Right ventricle myocardium inferior (tissue), 1 donor: ENCODE measurements at regions of chr5 and their contacts with region 1.

Region 1: GRCh38 chr5:109409844-109410388 is at the start of gene PJA2:
- DNase-seq: peak; percentile 99
- ATAC-seq: peak; percentile 97
- total RNA-seq, gene PJA2: 70.5 TPM

Region 2: GRCh38 chr5:108727651-108728565 is 682.0 kb before region 1 on chr5:
- intact Hi-C with region 1: loop called (anchors 5 kb)
- DNase-seq: peak; percentile 92
- ATAC-seq: peak; percentile 100

Region 3: DNA sequence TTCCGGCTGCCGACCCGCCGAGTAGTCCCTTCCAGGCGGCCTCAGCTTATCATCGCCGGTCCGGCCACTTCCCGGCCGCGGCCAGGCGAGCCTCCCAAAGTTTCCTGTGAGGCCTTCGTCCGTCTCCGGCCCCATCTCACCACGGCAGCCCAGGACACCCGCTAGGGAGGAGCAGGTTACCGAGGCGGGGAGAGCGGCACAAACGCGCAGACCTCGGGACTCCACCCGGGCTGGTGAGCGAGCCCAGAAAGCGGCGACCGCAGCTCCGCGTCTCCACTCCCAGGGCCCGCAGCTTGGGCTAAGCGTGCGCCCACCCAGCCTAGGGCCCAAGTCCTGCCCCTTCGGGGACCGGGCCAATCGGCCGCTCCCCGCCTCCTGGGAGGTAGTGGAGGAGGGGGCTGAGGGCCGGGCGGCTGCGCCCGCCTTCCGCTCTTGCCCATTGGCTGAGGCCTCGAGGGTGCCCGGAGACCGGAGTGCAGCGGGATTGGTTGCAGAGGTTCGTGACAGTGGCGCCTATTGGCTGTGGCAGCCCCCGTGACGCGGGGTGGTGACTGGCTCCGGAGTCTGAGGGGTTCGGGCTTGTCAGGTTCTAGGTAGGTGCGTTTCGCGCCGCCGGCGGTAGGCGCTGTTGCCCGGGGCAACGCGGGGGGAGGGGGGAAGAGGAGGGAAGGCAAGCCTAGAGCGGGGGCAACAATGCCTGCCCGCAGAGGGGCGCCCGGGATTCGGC is 661.4 kb before region 1 on chr5:
- intact Hi-C with region 1: loop called (anchors 1 kb)
- DNase-seq: peak; percentile 99
- ATAC-seq: peak; percentile 99

Region 4: GRCh38 chr5:109347252-109347888 is 62.5 kb before region 1 on chr5:
- intact Hi-C with region 1: loop called (anchors 5 kb)
- DNase-seq: peak; percentile 53
- ATAC-seq: peak; percentile 66

Region 5: DNA sequence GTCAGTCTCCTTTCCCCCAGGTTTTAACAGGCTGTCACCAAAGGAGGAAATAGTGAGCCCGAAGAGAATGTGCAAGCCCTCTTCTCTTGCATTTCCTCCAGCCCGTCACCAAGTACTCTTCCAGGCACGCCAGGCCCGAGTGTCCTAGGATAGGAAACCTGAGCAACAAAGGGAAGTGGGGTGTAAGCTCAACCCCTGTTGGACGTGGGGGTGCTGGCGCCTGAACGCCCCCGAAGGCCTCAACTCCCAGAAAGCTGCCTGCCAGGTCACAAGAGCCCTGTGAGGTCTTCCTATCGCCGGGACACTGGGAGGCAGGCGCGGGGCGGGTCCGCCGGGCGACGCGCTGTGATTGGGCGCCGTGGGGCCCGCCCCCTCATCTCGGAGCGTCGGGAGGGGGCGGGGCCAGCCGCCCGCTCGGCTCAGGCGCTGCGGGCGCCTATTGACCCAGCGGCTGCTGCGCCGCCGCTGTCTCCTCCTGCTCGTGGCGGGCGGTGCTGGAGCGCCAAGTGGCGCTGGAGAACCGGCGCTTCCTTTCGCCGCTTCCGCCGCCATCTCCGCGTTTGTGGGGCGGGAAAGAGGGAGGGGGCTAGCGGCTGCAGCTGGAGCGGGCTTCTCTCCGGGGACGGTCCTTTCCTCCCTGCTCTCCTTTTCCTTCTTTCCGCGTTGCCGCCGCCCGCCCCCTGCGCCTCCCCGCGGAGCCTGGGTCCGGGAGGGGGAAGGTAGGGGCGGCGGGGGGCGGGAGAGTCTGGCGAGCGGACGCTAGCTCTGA is 279.2 kb after region 1 on chr5:
- intact Hi-C with region 1: loop called (anchors 1 kb)
- DNase-seq: peak; percentile 95
- ATAC-seq: peak; percentile 95